CD4-positive, alpha-beta T cell (primary cell): ENCODE measurements at regions of chr2 and their contacts with region 1.

Region 1: GRCh38 chr2:22189893-22190480 is 1066.2 kb downstream of the TDRD15 start:
- DNase-seq: no peak
- ATAC-seq: no peak
- H3K4me3 ChIP-seq: no peak overlapping the region
- H3K4me3 Mint-ChIP-seq: no peak overlapping the region
- H3K27ac ChIP-seq: no peak overlapping the region
- H3K27ac Mint-ChIP-seq: no peak overlapping the region
- H3K4me1 ChIP-seq: no peaks in the 10 kb centered on the region
- H3K4me1 Mint-ChIP-seq: no peaks in the 10 kb centered on the region
- H3K27me3 ChIP-seq: no peaks in the 10 kb centered on the region
- H3K27me3 Mint-ChIP-seq: no peaks in the 10 kb centered on the region
- CTCF ChIP-seq: no peak

Region 2: GRCh38 chr2:22221006-22221405 is 31.0 kb after region 1 on chr2:
- CTCF ChIA-PET with region 1: no interaction called
- POLR2A ChIA-PET with region 1: no interaction called
- intact Hi-C with region 1: loop called in 1 of 2 experiments (anchors 1 kb)
- DNase-seq: no peak
- ATAC-seq: no peak
- H3K4me3 ChIP-seq: no peak overlapping the region
- H3K4me3 Mint-ChIP-seq: no peak overlapping the region
- H3K27ac ChIP-seq: no peak overlapping the region
- H3K27ac Mint-ChIP-seq: no peak overlapping the region
- H3K4me1 ChIP-seq: no peaks in the 10 kb centered on the region
- H3K4me1 Mint-ChIP-seq: no peaks in the 10 kb centered on the region
- H3K27me3 ChIP-seq: no peaks in the 10 kb centered on the region
- H3K27me3 Mint-ChIP-seq: no peaks in the 10 kb centered on the region
- CTCF ChIP-seq: no peak